Panc1 (cell line): ENCODE measurements at regions of chr10 and their contacts with region 1.

Region 1: GRCh38 chr10:125720002-125720382 is 483 bp downstream of the EDRF1 start:
- DNase-seq: no peak
- ATAC-seq: no peak
- H3K4me3 ChIP-seq: peak overlapping the region; percentile 98 to 100
- H3K27ac ChIP-seq: peak overlapping the region; percentile 96
- H3K4me1 ChIP-seq: peaks cover 16% of the 10 kb centered on the region; the same call in 1 of the 2 replicates
- H3K27me3 ChIP-seq: no peaks in the 10 kb centered on the region
- CTCF ChIP-seq: no peak

Region 2: DNA sequence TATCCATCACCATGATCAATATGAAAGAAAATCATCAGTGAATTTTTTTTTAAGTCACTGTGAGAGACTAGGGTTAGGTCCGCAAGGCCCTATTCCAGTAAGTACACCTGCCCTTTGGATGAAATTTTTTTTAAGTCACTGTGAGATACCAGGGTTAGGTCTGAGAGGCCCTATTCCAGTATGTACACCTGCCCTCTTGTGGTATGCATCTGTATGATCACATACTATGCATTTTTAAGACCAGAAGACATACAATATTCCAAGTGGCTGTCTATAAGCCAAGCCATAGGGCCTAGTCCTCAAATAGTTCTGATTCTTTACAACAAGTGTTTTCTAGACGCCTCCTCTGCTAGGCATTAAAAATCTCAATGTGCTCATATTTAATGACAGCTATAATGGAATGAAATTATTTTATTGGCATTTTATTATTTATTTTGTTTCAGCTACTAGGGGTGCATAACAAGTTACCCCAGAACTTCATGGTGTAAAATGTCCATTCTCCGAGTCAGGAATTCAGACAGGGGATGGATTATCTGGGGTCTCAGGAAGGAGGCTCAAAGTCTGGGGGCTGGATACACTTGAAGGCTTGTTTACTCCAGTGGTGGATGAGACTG is 90.1 kb before region 1 on chr10:
- CTCF ChIA-PET with region 1: no interaction called
- POLR2A ChIA-PET with region 1: no interaction called
- in situ Hi-C with region 1: no loop called
- intact Hi-C with region 1: no loop called
- DNase-seq: peak; percentile 24
- ATAC-seq: peak; percentile 91
- H3K4me3 ChIP-seq: no peak overlapping the region
- H3K27ac ChIP-seq: no peak overlapping the region
- H3K4me1 ChIP-seq: peaks cover 4% of the 10 kb centered on the region; the same call in 1 of the 2 replicates
- H3K27me3 ChIP-seq: peaks cover 27% of the 10 kb centered on the region
- CTCF ChIP-seq: peak; percentile 75

Region 3: DNA sequence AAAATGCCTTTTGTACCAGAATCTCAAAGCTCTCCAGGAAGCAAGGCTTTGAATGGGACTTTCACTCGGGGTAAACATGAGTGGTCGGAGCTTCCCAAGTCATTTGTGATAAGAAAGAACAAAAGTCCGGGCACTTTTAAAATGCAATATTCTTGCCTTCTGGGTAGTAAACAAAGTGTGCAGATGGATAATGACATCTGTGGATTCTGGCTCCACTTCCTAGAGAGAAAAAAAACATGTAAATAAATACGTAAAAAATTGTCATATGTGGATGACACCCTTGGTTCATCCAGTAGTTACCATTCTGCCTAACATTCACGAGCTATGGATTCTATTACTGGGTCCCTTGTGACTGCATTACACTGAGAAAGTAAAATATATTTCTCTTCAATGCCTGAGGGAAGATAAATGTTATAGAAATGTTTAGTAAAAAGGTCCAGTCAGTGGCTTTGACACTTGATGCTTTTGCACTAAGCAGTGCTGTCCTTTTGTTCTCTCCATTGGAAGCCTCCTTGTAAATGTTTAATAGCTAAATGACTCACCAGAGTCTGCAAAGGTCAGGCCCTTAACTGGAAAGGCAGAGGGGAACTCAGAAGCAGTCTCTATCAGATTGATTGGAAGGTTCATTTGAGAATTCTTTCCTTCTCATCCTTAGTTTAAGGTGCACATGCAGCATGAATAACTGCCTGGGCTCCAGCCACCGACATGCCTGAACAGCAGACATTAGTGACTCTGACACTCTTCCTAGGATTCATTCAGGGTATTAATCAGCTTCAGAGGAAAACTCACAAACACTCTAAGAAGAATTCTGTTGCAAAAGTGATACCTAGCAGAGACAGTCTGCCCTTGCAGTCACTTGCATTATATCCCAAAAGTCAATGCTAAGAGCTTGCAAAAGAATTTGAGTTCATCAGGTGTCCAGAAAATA is 12.2 kb before region 1 on chr10:
- CTCF ChIA-PET with region 1: no interaction called
- POLR2A ChIA-PET with region 1: interaction called, 11 read pairs
- in situ Hi-C with region 1: no loop called
- intact Hi-C with region 1: no loop called
- DNase-seq: no peak
- ATAC-seq: peak; percentile 93
- H3K4me3 ChIP-seq: no peak overlapping the region
- H3K27ac ChIP-seq: peak overlapping the region; percentile 72
- H3K4me1 ChIP-seq: peaks cover 35% of the 10 kb centered on the region
- H3K27me3 ChIP-seq: no peaks in the 10 kb centered on the region
- CTCF ChIP-seq: no peak